ENCODE measurements at regions of chr19 and their contacts with region 1.

Region 1: DNA sequence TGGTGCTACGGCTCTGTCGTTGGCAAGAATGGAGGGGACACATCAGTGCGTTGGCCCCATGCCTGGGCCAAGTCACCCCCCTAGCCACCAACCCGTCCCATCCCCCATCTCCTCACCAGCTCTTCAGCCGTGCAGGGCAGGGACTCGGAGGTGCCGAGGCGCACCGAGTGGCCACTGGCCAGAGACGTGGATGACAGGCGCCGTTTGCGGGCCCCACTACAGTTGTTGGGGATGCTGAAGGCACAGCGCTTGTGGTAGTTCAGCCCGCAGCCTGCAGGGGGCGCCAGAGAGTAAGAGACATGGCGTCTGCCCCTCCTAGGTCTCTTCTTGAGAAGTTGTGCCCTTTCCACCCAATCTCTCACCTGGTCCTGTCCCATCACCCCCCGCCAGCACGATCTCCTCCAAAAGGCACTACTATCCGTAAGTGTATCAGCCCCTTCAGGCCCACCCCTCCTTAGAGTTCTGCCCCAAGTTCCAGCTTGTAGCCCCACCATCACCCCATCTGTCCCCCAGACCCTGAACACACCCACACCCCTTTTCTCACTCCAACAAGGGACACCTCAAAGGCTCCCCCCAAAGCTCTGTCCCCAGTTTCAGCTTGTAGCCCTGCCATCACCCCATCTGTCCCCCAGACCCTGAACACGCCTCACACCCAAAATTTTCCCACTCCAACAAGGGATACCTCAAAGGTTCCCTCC is 12.4 kb downstream of the PRKD2 start:
- DNase-seq: peak; percentile 58 to 86 (median 81)
- H3K4me3 ChIP-seq: no peak overlapping the region
- H3K27ac ChIP-seq: no peak overlapping the region
- H3K4me1 ChIP-seq: no peaks in the 10 kb centered on the region
- H3K27me3 ChIP-seq: no peaks in the 10 kb centered on the region
- CTCF ChIP-seq: peak; percentile 85 to 95 (median 87)
- EP300 ChIP-seq: no peak
- POLR2A ChIP-seq: no peak

Region 2: DNA sequence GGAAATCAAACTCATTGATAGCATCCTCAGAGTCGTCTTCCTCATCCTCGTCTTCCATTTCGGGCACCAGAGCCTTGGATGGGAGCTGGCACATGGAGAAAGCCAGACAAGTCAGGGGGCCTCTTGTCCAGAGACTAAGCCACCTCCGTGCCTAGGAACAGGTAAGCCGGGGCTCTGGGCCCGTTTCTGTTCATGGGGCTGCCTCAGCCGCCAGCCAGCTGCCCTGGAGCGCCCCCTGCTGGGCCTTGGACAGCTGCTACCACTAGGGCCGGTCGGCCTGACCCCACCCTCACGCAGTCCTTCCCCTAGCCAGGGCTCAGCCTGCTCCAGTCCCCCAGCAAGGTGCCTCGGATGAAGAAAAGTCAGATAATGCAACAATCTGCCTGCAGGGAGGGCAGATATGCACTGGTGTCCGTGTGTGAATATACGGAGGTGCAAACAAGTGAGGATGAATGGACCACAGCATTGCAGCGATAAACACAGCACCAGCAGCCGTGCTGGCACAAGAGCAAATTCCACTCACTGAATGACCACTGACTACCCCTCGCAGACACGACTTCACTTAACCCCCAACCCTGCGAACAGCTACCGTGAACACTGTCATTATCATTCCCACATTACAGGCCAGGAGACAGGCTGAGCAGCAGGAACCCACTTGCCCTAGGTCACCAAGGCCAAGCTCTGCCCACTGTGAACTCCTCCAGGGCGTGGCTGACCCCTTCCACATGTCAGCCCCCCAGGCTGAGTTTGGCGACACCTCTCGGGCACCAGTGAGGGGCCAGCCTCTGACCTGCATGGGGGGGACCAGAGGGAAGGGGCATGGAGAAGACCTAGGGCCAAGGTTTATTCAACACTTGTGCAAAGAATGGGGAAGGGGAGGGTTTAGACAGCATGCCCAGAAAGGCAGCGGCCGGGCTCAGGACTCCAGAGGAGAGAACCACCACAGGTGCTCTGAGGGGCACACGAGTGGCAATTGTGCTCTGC is 24.5 kb after region 1 on chr19:
- intact Hi-C with region 1: loop called in 1 of 4 experiments (anchors 2 kb)
- DNase-seq: peak; percentile 65 to 86 (median 81)
- H3K4me3 ChIP-seq: no peak overlapping the region
- H3K27ac ChIP-seq: peak overlapping the region; percentile 6 to 39
- H3K4me1 ChIP-seq: no peaks in the 10 kb centered on the region
- H3K27me3 ChIP-seq: no peaks in the 10 kb centered on the region
- CTCF ChIP-seq: peak; percentile 81 to 97 (median 89)
- EP300 ChIP-seq: no peak
- POLR2A ChIP-seq: no peak